ENCODE measurements at regions of chr15 and their contacts with region 1.

Region 1: GRCh38 chr15:70636540-70637165 is 126.7 kb downstream of the UACA start:
- DNase-seq: peak; percentile 28
- H3K4me3 ChIP-seq: no peak overlapping the region
- H3K27ac ChIP-seq: no peak overlapping the region
- H3K4me1 ChIP-seq: no peaks in the 10 kb centered on the region
- H3K27me3 ChIP-seq: peaks cover 2 to 5% of the 10 kb centered on the region in 2 experiments
- CTCF ChIP-seq: peak; percentile 5 to 27
- POLR2A ChIP-seq: no peak

Region 2: DNA sequence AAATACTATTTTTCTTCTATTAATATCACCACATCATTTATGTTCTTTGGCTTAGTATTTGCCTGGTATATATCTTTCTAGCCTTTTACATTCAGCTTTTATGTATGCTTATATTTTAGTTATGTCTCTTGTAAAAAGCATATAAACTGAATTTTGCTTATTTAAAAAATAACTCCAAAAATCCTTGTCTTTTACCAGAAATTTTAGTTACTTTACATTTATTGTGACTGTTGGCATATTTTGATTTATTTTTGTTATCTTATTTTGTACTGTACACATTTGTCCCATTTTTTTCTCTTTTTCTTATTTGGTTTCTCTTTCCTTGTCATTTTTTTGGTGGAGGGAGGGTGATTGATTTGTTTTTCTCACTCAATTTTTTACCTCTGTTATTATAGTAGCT is 42.9 kb before region 1 on chr15:
- CTCF ChIA-PET with region 1: no interaction called
- POLR2A ChIA-PET with region 1: no interaction called
- dilution Hi-C with region 1: no loop called
- intact Hi-C with region 1: no loop called
- DNase-seq: no peak
- H3K4me3 ChIP-seq: no peak overlapping the region
- H3K27ac ChIP-seq: no peak overlapping the region
- H3K4me1 ChIP-seq: no peaks in the 10 kb centered on the region
- H3K27me3 ChIP-seq: peaks cover 6 to 23% of the 10 kb centered on the region in 2 experiments
- CTCF ChIP-seq: no peak
- POLR2A ChIP-seq: no peak

Region 3: DNA sequence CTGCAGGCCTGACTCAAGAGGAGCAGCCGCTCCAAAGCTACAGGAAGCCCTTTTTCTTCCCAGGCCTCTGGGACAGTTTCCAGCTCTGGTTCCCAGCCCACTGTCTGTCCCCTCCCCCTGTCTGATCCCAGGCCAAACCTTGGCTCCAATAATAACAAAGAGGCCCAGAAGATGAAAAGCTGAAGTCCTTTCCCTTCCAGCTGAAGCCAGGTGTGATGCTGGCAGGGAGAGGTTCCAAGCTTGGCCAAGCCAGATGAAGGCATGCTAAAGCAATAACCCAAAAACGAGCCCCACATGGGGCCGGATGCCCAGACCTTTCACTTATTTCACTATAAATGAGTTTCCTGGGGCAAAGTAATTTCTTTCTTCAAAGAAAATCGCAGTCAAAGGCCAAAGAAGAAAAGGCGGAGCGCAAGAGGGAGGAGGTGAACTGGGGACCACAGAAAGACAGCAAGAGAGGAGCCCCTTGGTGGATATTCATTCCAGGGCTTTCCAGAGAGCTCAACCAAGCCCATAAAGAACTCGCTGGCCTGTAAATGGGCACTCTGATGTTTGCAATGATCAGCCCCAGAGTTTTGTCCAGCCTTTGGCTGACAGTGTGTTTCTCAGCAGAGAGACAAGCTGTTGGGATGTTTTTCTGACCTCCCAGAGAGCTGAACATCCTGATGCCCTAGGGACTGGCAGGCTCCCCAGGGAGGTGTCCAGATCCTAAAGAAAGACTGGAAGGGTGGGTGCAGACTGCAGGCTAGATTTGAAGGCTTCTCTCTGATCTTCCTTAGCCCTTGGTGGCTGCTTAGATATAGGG is 30.8 kb before region 1 on chr15:
- CTCF ChIA-PET with region 1: interaction called, 11 read pairs
- POLR2A ChIA-PET with region 1: no interaction called
- dilution Hi-C with region 1: no loop called
- intact Hi-C with region 1: no loop called
- DNase-seq: peak; percentile 94
- H3K4me3 ChIP-seq: no peak overlapping the region
- H3K27ac ChIP-seq: no peak overlapping the region
- H3K4me1 ChIP-seq: peaks cover 15% of the 10 kb centered on the region
- H3K27me3 ChIP-seq: peaks cover 0 to 2% of the 10 kb centered on the region in 2 experiments
- CTCF ChIP-seq: no peak
- POLR2A ChIP-seq: no peak

Measured in endothelial cell of umbilical vein (primary cell).